ENCODE measurements at regions of chr5 and their contacts with region 1.

Region 1: GRCh38 chr5:177188775-177189174 is 55.2 kb downstream of the NSD1 start:
- DNase-seq: no peak
- H3K4me3 ChIP-seq: no peak overlapping the region
- H3K27ac ChIP-seq: no peak overlapping the region
- H3K27me3 ChIP-seq: no peaks in the 10 kb centered on the region
- CTCF ChIP-seq: no peak

Region 2: GRCh38 chr5:177176175-177176711 is 12.5 kb before region 1 on chr5:
- CTCF ChIA-PET with region 1: interaction called, 3 read pairs
- POLR2A ChIA-PET with region 1: interaction called, 18 read pairs
- DNase-seq: no peak
- H3K4me3 ChIP-seq: no peak overlapping the region
- H3K27ac ChIP-seq: no peak overlapping the region
- H3K27me3 ChIP-seq: no peaks in the 10 kb centered on the region
- CTCF ChIP-seq: no peak

Region 3: DNA sequence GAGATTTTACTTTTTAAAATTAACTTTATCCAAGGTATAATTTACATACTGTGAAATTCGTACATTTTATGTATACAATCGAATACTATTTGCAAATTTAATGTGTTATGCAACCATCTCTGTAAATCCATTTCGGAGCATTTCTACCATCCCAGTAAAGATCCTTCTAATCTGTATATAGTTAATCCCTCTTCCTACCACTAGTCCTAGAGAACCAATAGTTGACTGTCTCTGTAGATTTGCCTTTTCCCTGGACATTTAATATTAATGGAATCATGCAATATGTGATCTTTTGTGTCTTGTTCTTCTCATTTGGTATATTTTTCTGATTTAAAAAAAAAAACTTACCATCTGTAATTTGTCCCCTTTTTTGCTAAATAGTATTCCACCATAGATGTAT is 40.0 kb after region 1 on chr5:
- CTCF ChIA-PET with region 1: no interaction called
- POLR2A ChIA-PET with region 1: no interaction called
- DNase-seq: no peak
- H3K4me3 ChIP-seq: no peak overlapping the region
- H3K27ac ChIP-seq: no peak overlapping the region
- H3K27me3 ChIP-seq: no peaks in the 10 kb centered on the region
- CTCF ChIP-seq: no peak

Region 4: GRCh38 chr5:177311723-177312648 is 123.2 kb after region 1 on chr5 and contains the start of gene MXD3:
- CTCF ChIA-PET with region 1: no interaction called
- POLR2A ChIA-PET with region 1: no interaction called
- DNase-seq: peak; percentile 77
- H3K4me3 ChIP-seq: peak within 1 kb of the TSS; percentile 68
- H3K27ac ChIP-seq: peak within 1 kb of the TSS; percentile 78
- H3K27me3 ChIP-seq: no peaks in the 10 kb centered on the region
- CTCF ChIP-seq: no peak
- polyA plus RNA-seq, gene MXD3: 2.8 and 2.9 TPM in 2 replicates